ENCODE measurements at regions of chr2 and their contacts with region 1.

Region 1: GRCh38 chr2:197828464-197829135 is 24.2 kb downstream of the PLCL1 start:
- DNase-seq: no peak
- ATAC-seq: no peak
- H3K4me3 ChIP-seq: no peak overlapping the region
- H3K27ac ChIP-seq: no peak overlapping the region
- H3K4me1 ChIP-seq: no peaks in the 10 kb centered on the region
- H3K27me3 ChIP-seq: no peaks in the 10 kb centered on the region; the same call in none of the 2 replicates
- CTCF ChIP-seq: no peak

Region 2: GRCh38 chr2:197851451-197851850 is 22.9 kb after region 1 on chr2:
- CTCF ChIA-PET with region 1: interaction called, 10 read pairs
- POLR2A ChIA-PET with region 1: no interaction called
- in situ Hi-C with region 1: no loop called
- intact Hi-C with region 1: no loop called
- DNase-seq: no peak
- ATAC-seq: no peak
- H3K4me3 ChIP-seq: no peak overlapping the region
- H3K27ac ChIP-seq: no peak overlapping the region
- H3K4me1 ChIP-seq: no peaks in the 10 kb centered on the region
- H3K27me3 ChIP-seq: peaks cover 7% of the 10 kb centered on the region
- CTCF ChIP-seq: peak; percentile 9; the same call in 1 of the 2 replicates